Adrenal gland (tissue), 19 donors: ENCODE measurements at regions of chr14 and their contacts with region 1.

Region 1: GRCh38 chr14:102437997-102438915 is 71.3 kb downstream of the ANKRD9 start:
- DNase-seq: peak; percentile 83 to 93 (median 88)
- H3K4me3 ChIP-seq: peak overlapping the region in 1 of 4 donors; percentile 43
- H3K27ac ChIP-seq: no peak overlapping the region
- H3K4me1 ChIP-seq: peaks cover 0 to 6% of the 10 kb centered on the region in 2 donors
- H3K27me3 ChIP-seq: no peaks in the 10 kb centered on the region
- CTCF ChIP-seq: peak; percentile 59 to 85 (median 74)
- POLR2A ChIP-seq: no peak

Region 2: DNA sequence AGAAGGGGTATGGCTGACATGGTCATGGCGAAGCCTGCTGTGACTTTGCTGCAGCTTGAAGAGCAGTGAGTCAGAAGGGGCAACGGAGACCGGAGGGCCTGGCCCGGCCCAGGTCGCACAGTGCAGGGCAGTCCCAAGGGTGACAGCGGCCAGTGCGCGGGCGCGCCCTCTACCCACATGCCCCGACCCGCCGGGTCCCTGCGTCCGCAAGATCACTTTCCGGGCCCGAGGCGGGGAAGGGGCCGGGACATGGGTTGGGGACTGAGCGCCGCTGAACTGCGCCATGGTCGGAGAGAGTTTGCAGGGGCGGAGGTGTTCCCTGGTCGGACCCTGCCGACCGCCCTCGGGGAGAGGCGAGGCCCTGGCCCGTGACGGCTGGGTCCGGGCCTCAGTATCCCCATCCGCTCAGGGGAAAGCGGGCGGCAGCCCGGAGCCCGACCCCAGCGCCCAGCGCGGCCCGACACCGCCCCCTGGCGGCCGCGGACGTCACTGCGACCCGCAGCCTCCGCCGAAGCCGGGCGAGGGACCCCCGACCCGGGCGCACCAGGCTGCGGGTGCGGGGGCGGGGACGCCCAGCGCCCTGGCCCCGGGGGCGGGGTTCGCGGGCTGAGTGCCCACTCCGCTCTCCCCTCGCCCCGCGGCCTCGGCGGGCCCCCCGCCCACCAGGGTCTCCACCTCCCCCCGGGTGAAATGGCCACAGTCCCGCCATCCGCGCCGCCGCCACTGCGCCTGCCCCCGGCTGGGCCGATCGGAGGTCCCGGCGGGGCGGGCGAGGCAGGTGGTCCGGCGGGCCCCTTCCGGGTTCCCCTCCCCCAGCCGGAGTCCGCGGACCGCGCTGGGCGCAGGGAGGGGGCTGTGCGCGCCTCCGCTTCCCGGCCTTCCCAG is 78.5 kb after region 1 on chr14:
- intact Hi-C with region 1: loop called (anchors 2 kb)
- DNase-seq: peak in 6 of 7 donors; percentile 66 to 73 (median 70)
- H3K4me3 ChIP-seq: peak overlapping the region in 3 of 4 donors; percentile 25 to 88 (median 65)
- H3K27ac ChIP-seq: peak overlapping the region in 2 of 5 donors; percentile 40 to 83
- H3K4me1 ChIP-seq: peaks cover 4% of the 10 kb centered on the region in 2 donors
- H3K27me3 ChIP-seq: no peaks in the 10 kb centered on the region
- CTCF ChIP-seq: peak; percentile 23 to 98 (median 76)
- POLR2A ChIP-seq: no peak